ENCODE measurements at regions of chr20 and their contacts with region 1.

Region 1: DNA sequence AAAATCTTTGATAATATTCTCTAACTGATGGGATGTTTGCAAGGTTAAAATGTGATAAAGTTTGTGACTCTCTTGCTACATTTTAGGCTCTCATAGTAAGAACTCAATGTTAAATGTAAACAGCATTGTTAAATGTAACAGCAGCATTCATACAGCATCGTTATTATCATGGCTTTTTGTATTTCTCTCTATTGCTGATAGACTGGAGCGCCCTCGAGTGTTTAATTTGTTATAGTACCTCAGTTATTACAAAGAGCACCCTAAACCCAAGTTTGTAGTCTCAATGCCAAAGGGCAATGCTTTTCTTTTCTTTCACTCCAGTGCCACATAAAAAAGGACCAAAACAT is 14.9 kb upstream of the TTPAL start:
- DNase-seq: peak; percentile 45
- H3K4me3 ChIP-seq: no peak overlapping the region
- H3K27ac ChIP-seq: no peak overlapping the region
- H3K4me1 ChIP-seq: no peaks in the 10 kb centered on the region
- H3K27me3 ChIP-seq: no peaks in the 10 kb centered on the region
- CTCF ChIP-seq: peak; percentile 62

Region 2: GRCh38 chr20:44109951-44110361 is 350.8 kb before region 1 on chr20:
- CTCF ChIA-PET with region 1: no interaction called
- POLR2A ChIA-PET with region 1: no interaction called
- intact Hi-C with region 1: loop called (anchors 10 kb)
- DNase-seq: no peak
- H3K4me3 ChIP-seq: no peak overlapping the region
- H3K27ac ChIP-seq: no peak overlapping the region
- H3K4me1 ChIP-seq: no peaks in the 10 kb centered on the region
- H3K27me3 ChIP-seq: no peaks in the 10 kb centered on the region
- CTCF ChIP-seq: peak; percentile 33; the same call in 1 of the 2 replicates

Region 3: DNA sequence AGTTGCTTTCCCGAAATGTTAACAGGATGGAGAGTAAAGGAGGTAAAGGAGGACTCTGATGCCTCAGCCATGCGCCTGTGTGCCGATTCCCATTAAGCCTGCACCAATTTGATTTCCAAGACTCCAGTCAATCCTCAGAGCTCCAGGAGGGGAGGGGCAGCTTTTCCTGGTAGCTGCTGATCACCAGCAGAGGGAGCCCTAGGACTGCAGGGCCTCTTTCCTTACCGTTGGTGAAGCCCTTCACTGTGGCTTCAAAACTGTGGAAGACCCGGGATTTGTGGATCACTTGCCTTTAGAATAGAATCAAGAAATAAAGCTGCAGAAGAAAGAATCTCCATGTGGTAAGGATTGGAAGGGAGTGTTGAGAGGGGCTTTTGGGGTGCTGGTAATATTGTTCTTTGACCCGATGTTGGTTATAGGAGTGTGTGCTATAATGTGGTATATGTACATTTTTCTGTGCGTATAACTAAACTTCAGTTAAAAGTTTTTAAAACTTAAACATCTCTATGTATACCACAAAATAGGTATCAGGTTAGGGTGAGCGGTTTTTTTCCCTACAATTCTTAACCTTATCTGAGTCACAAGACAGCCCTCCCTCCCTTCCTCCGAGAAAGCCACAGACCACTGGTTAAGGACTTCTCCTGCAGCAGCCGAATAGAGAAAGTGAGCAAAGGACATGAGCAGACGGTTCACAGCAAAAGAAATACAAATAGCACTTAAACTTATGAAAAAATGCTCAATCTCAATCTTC is 243.3 kb before region 1 on chr20:
- CTCF ChIA-PET with region 1: interaction called, 7 read pairs
- POLR2A ChIA-PET with region 1: no interaction called
- intact Hi-C with region 1: loop called (anchors 5 kb)
- DNase-seq: peak; percentile 74
- H3K4me3 ChIP-seq: no peak overlapping the region
- H3K27ac ChIP-seq: no peak overlapping the region
- H3K4me1 ChIP-seq: no peaks in the 10 kb centered on the region
- H3K27me3 ChIP-seq: no peaks in the 10 kb centered on the region
- CTCF ChIP-seq: peak; percentile 86

Region 4: DNA sequence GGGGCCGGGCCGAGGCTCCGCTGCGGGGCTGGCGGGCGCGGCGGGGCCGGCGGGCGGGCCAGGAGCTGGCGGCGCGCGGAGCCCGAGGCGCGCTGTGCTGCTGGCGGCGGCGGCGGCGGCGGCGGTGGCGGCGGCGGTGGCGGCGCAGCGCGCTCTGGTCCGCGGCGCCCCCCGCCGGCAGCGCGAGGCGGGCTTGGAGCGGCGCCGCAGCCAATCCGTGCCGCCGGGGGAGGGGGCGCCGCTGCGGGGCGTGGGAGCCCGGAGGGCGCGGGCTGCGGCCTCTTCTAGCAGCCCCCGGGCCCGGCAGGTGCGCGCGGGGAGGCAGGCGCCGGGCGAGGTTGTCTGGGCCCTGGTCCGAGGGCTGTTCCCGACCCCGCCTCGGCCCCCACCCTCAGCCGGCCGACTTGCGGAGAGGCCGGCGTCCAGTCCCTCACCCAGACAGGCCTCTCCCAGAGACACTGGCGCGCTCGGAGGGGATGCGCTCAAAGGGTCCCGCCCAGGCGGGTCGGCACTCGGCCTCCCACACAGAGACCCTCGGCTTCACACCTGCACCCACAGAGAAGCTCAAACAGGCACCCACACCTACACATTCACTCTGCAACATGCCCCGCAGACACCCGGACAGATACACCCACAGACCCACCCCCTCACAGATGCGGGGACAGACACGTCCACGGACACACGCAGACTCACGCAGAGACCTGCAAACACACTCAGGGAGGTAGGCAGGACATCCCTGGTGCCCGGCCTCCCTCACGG is 349.8 kb after region 1 on chr20 and contains the start of gene RIMS4:
- CTCF ChIA-PET with region 1: no interaction called
- POLR2A ChIA-PET with region 1: no interaction called
- intact Hi-C with region 1: no loop called
- DNase-seq: peak; percentile 39
- H3K4me3 ChIP-seq: peak within 1 kb of the TSS; percentile 35
- H3K27ac ChIP-seq: no peak within 1 kb of the TSS
- H3K4me1 ChIP-seq: no peaks in the 10 kb centered on the region
- H3K27me3 ChIP-seq: peaks cover 58% of the 10 kb centered on the region
- CTCF ChIP-seq: no peak
- total RNA-seq, gene RIMS4: 0.24 and 0.39 TPM in 2 replicates